Aorta (tissue), 5 donors: ENCODE measurements at regions of chr14 and their contacts with region 1.

Region 1: GRCh38 chr14:69191340-69192111 is at the start of gene EXD2:
- DNase-seq: peak; percentile 90 to 91
- ATAC-seq: peak; percentile 95
- H3K4me3 ChIP-seq: peak within 1 kb of the TSS; percentile 30 to 51
- H3K27ac ChIP-seq: no peak within 1 kb of the TSS
- H3K4me1 ChIP-seq: no peaks in the 10 kb centered on the region
- H3K27me3 ChIP-seq: no peaks in the 10 kb centered on the region
- total RNA-seq, gene EXD2: 13.1 to 19.4 TPM

Region 2: DNA sequence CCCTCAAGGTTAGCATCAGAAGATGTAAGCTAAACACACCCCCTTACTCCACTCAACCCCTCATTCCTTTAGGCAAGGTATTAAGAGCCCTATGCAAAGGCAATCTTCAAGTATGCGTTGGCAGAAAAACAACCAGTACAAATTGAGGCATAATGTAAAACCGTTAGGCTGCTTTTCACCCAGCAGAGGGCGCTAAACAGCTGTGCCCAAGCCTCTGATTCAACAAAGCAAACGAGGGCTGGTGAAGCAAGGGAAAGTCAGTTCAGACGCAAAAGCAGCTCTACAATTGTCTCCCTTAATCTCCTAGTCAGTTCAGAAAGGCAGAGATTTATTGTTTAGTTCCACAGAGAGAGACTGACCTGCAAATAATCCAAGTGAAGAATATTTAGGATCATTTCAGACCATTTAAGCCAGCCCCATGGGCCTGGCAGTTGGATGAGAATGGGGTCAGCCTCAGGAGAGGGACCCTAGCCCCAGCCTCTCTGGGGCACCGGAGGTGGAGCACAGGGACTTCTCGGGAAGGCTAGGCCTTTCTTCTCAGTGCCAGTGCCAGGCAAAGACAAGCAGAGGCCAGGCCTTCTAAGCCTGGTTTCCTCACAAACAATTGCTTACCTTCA is 62.2 kb before region 1 on chr14:
- intact Hi-C with region 1: loop called in 1 of 2 experiments (anchors 5 kb)
- DNase-seq: peak; percentile 79 to 81
- ATAC-seq: peak; percentile 88
- H3K4me3 ChIP-seq: no peak overlapping the region
- H3K27ac ChIP-seq: no peak overlapping the region
- H3K4me1 ChIP-seq: peaks cover 0 to 14% of the 10 kb centered on the region in 2 donors
- H3K27me3 ChIP-seq: no peaks in the 10 kb centered on the region

Region 3: GRCh38 chr14:69153131-69153872 is 38.2 kb before region 1 on chr14:
- intact Hi-C with region 1: loop called (anchors 1 to 5 kb)
- DNase-seq: peak; percentile 97
- ATAC-seq: peak; percentile 93
- H3K4me3 ChIP-seq: peak overlapping the region; percentile 90 to 99
- H3K27ac ChIP-seq: peak overlapping the region; percentile 23 to 80
- H3K4me1 ChIP-seq: peaks cover 0 to 2% of the 10 kb centered on the region in 2 donors
- H3K27me3 ChIP-seq: no peaks in the 10 kb centered on the region

Region 4: DNA sequence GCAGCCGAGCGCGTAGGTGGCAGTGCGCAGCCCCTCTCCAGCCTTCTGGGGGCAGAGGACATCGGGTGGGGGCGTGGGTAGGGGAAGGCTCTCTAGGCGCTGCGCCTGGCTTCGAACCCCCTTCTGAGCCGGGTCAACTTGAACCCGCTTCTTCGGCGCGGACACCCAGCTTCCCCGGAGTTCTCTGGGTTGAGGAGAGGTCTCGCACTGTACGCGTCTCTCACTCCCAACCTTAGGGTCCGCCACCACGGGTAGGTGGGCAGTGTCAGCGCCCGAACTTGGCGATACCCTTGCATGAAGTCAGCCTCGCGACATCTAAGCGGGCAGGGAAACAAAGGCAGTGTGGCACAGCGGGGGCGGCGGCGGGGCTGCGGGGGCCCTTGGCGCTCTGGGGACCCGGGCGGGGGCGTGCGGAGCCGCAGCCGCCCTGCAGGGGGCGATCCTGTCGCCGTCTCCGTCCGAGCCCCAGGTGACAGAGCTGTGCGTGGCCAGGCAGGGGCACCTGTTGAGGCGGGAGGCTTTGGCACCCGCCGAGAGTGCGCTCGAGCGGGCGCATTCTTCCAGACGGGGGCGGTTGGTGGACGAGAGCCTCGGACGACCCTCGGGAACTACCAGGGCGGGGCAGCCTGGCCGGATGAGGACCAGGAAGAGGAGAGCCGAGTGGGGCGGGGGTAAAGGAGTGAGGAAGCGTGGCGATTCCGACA is 69.5 kb after region 1 on chr14:
- intact Hi-C with region 1: no loop called
- DNase-seq: peak in 1 of 2 donors; percentile 83
- ATAC-seq: peak; percentile 51
- H3K4me3 ChIP-seq: peak overlapping the region; percentile 37 to 50
- H3K27ac ChIP-seq: no peak overlapping the region
- H3K4me1 ChIP-seq: no peaks in the 10 kb centered on the region
- H3K27me3 ChIP-seq: no peaks in the 10 kb centered on the region

Region 5: DNA sequence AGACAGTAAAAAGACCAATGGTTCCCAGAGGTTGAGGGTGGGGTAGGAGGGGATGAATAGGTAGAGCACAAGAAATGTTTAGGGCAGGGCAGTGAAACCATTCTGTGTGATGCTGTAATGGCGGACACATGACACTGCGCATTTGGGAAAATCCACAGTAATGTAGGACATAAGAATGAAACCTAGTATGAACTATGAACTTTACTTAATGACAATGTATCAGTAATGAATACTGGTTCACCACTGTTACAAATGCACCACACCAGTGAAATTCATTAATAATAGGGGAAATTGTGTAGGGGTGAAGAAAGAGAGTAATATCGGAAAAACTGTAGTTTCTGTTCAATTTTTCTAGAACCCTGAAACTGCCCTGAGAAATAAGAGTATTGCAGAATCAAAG is 201.0 kb after region 1 on chr14:
- intact Hi-C with region 1: no loop called
- DNase-seq: no peak
- ATAC-seq: no peak
- H3K4me3 ChIP-seq: no peak overlapping the region
- H3K27ac ChIP-seq: no peak overlapping the region
- H3K4me1 ChIP-seq: no peaks in the 10 kb centered on the region
- H3K27me3 ChIP-seq: no peaks in the 10 kb centered on the region